PC-9 (cell line): ENCODE measurements at regions of chr3 and their contacts with region 1.

Region 1: DNA sequence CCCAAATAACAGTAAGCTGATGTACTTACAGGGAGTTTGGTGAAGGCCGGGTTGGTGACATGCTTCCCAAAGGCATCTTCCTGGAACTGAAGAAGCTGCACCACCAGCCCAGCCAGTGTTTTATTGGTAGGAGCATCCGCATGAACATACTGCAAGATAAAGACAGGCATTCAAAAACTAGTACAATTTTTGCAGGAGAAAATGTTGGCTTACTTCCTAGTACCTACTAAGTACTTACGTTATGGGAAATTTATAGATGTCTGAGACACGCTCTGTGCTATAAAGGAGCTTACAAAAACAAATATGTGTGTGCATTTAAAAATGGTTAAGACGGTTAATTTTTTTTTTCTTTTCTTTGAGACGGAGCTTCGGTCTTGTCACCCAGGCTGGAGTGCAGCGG is 8.9 kb downstream of the SMARCC1 start:
- DNase-seq: no peak
- H3K4me3 ChIP-seq: no peak overlapping the region
- H3K27ac ChIP-seq: no peak overlapping the region
- H3K4me1 ChIP-seq: no peaks in the 10 kb centered on the region
- H3K27me3 ChIP-seq: no peaks in the 10 kb centered on the region
- CTCF ChIP-seq: no peak

Region 2: DNA sequence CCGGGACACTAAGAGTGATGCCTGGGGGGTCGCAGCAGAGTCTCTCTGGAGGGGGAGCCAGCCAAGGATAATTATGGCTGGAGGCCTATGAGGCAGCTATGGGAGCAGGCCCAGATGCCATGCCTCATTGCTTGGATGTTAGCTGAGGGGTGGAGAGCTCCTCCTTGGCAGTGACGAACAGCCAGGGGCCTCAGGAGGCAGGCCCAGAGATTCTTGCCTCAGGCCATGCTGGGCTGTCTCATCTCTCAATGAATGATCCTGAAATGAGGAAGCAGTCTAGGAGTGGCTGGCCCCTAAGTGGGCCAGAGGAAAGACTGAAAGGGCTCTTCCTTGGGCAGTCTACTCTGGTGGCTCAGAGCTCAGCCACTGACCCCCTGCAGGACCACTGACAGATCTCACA is 511.5 kb before region 1 on chr3:
- CTCF ChIA-PET with region 1: no interaction called
- POLR2A ChIA-PET with region 1: no interaction called
- intact Hi-C with region 1: no loop called
- DNase-seq: peak in 1 of 2 experiments; percentile 35
- H3K4me3 ChIP-seq: no peak overlapping the region
- H3K27ac ChIP-seq: no peak overlapping the region
- H3K4me1 ChIP-seq: no peaks in the 10 kb centered on the region
- H3K27me3 ChIP-seq: no peaks in the 10 kb centered on the region
- CTCF ChIP-seq: no peak

Region 3: DNA sequence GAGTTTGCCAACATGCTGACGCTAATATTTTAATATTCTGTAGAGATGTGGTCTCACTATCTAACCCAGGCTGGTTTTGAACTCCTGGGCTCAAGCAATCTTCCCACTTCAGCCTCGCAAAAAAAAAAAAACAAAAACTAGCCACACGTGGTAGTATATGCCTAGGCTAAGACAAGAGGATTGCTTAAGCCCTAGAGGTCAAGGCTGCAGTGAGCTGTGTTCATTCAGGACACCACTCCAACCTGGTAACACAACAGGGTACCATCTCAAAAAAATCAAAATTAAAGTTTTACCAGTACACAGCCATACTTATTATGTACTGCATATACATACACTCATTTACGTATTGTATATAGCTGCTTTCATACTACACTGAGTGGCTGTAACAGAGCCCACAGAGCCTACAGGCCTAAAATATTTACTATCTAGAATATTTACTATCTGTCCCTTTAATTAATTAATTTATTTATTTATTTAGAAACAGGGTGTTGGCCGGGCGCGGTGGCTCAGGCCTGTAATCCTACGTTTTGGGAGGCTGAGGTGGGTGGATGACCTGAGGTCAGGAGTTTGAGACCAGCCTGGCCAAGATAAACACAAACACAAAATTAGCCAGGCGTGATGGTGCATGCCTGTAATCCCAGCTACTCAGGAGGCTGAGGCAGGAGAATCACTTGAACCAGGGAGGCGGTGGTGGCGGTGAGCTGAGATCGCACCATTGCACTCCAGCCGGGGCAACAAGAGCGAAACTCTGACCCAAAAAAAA is 14.3 kb before region 1 on chr3:
- CTCF ChIA-PET with region 1: no interaction called
- POLR2A ChIA-PET with region 1: interaction called, 12 read pairs
- intact Hi-C with region 1: no loop called
- DNase-seq: no peak
- H3K4me3 ChIP-seq: no peak overlapping the region
- H3K27ac ChIP-seq: 0 out of 2 replicates have a peak overlapping the region, but pooled peaks have one; percentile 9
- H3K4me1 ChIP-seq: 0 out of 2 replicates have a peak, but pooled peaks cover 9% of the 10 kb centered on the region
- H3K27me3 ChIP-seq: no peaks in the 10 kb centered on the region
- CTCF ChIP-seq: no peak

Region 4: DNA sequence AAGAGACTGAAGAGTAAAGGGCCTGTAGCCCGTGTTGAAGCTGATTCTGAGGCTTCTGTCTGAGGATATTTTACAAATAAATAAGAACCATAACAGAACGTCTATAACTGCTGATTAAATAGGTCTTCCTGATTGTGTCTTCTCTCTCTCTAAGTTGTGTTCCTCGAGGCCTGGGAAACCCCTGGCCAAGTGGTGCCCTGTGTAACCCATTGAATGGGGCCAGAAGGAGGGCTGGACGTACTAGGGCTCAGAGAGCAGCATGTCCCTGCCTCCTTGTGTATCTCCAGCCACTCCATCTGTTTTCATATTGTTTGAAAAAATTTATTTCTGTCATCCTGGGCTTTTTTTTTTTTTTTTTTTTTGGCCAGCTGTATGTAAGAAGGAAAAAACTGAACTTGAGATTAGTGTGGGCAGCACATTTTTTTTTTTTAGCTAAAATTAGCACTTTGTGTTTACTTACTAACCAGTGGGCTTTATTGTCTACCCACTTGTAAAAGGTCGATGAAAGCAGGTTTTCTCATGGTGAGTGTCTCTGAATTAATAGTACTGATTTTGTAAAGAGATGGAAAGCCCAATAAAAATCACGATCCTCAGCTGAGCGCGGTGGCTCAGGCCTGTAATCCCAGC is 40.9 kb after region 1 on chr3:
- CTCF ChIA-PET with region 1: no interaction called
- POLR2A ChIA-PET with region 1: no interaction called
- intact Hi-C with region 1: no loop called
- DNase-seq: no peak
- H3K4me3 ChIP-seq: no peak overlapping the region
- H3K27ac ChIP-seq: no peak overlapping the region
- H3K4me1 ChIP-seq: no peaks in the 10 kb centered on the region
- H3K27me3 ChIP-seq: no peaks in the 10 kb centered on the region
- CTCF ChIP-seq: no peak

Region 5: GRCh38 chr3:47899495-47900125 is 126.8 kb after region 1 on chr3:
- CTCF ChIA-PET with region 1: no interaction called
- POLR2A ChIA-PET with region 1: no interaction called
- intact Hi-C with region 1: no loop called
- DNase-seq: no peak
- H3K4me3 ChIP-seq: no peak overlapping the region
- H3K27ac ChIP-seq: no peak overlapping the region
- H3K4me1 ChIP-seq: no peaks in the 10 kb centered on the region
- H3K27me3 ChIP-seq: no peaks in the 10 kb centered on the region
- CTCF ChIP-seq: no peak